Activated CD8-positive, alpha-beta T cell treated with anti-CD3 and anti-CD28 coated beads for 36 hours (primary cell): ENCODE measurements at regions of chrX and their contacts with region 1.

Region 1: GRCh38 chrX:49269010-49269767 is 404 bp upstream of the PPP1R3F start:
- DNase-seq: peak; percentile 97
- ATAC-seq: peak; percentile 80
- H3K4me3 Mint-ChIP-seq: peak overlapping the region; percentile 82
- H3K27ac Mint-ChIP-seq: peak overlapping the region; percentile 99
- H3K4me1 Mint-ChIP-seq: peaks cover 55% of the 10 kb centered on the region
- H3K27me3 Mint-ChIP-seq: no peaks in the 10 kb centered on the region
- CTCF ChIP-seq: no peak

Region 2: GRCh38 chrX:49120099-49120498 is 149.1 kb before region 1 on chrX:
- CTCF ChIA-PET with region 1: no interaction called
- POLR2A ChIA-PET with region 1: no interaction called
- intact Hi-C with region 1: no loop called
- DNase-seq: no peak
- ATAC-seq: no peak
- H3K4me3 Mint-ChIP-seq: no peak overlapping the region
- H3K27ac Mint-ChIP-seq: peak overlapping the region; percentile 1
- H3K4me1 Mint-ChIP-seq: peaks cover 33% of the 10 kb centered on the region
- H3K27me3 Mint-ChIP-seq: no peaks in the 10 kb centered on the region
- CTCF ChIP-seq: no peak

Region 3: DNA sequence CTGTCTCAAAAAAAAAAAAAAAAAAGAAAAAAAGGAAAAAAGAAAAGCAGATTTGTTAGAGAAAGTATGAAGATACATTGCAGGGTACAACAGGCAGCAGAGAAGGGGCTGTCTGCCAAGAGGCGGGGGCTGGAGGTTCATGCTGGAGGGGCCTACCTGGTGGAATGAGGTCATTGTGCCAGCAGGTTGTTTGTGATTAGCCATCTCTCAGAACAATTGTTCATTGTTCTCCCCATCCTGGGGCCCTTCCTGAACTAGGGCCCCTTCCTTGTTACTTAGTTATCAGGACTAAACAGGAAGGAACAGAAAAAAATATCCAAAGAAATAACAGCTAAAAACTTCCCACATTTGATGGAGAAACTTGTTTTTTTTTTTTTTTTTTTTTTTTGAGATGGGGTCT is 131.7 kb before region 1 on chrX:
- CTCF ChIA-PET with region 1: no interaction called
- POLR2A ChIA-PET with region 1: no interaction called
- intact Hi-C with region 1: no loop called
- DNase-seq: no peak
- ATAC-seq: no peak
- H3K4me3 Mint-ChIP-seq: no peak overlapping the region
- H3K27ac Mint-ChIP-seq: no peak overlapping the region
- H3K4me1 Mint-ChIP-seq: no peaks in the 10 kb centered on the region
- H3K27me3 Mint-ChIP-seq: no peaks in the 10 kb centered on the region
- CTCF ChIP-seq: no peak

Region 4: DNA sequence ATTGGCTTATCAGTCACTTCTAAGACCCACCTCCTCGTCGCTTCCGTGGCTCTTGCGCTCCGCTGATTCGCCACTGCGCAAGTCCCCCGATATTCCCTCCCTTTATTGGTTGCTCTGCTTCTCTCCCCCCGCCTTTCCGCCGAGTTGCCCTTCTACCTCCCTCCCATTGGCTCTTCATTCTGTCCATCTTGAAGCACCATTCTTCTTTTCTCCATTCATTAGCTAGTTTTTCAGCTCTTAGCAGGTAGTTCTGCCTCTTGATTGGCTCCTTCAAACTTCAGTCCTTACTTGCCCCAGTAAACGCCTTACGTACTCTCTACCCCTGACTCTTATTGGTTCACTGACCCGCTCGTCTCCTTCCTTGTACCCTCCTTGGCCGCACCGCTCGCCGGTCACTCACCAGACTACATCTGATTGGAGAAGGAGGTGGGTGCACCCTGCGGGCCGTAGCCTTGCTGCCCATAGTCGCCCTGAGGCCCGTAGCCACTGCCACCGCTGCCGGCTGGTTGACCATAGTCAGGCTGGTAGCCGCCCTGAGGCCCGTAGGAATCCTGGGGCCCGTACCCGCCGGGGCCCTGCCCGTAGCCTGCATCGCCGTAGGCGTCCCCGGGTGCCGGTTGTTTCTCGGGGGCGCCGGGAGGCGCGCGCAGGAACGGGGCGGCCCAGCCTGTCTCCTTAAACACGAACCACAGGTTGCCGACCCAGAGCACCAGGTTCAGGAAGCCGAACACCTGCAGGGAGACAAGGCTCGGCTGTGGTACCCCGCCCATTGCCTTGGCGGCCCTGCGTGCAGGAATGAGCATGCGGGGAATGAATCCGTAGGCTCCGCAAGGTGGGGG is 77.9 kb before region 1 on chrX:
- CTCF ChIA-PET with region 1: interaction called, 12 read pairs
- POLR2A ChIA-PET with region 1: no interaction called
- intact Hi-C with region 1: loop called (anchors 5 kb)
- DNase-seq: peak; percentile 88
- ATAC-seq: peak; percentile 89
- H3K4me3 Mint-ChIP-seq: peak overlapping the region; percentile 86
- H3K27ac Mint-ChIP-seq: peak overlapping the region; percentile 94
- H3K4me1 Mint-ChIP-seq: peaks cover 26% of the 10 kb centered on the region
- H3K27me3 Mint-ChIP-seq: no peaks in the 10 kb centered on the region
- CTCF ChIP-seq: no peak